Testis (tissue), 5 donors: ENCODE measurements at regions of chr14 and their contacts with region 1.

Region 1: GRCh38 chr14:37253905-37254304 is 56.2 kb downstream of the MIPOL1 start:
- DNase-seq: no peak
- H3K4me3 ChIP-seq: no peak overlapping the region
- H3K27ac ChIP-seq: no peak overlapping the region
- H3K4me1 ChIP-seq: no peaks in the 10 kb centered on the region
- H3K27me3 ChIP-seq: no peaks in the 10 kb centered on the region
- CTCF ChIP-seq: no peak
- POLR2A ChIP-seq: no peak

Region 2: DNA sequence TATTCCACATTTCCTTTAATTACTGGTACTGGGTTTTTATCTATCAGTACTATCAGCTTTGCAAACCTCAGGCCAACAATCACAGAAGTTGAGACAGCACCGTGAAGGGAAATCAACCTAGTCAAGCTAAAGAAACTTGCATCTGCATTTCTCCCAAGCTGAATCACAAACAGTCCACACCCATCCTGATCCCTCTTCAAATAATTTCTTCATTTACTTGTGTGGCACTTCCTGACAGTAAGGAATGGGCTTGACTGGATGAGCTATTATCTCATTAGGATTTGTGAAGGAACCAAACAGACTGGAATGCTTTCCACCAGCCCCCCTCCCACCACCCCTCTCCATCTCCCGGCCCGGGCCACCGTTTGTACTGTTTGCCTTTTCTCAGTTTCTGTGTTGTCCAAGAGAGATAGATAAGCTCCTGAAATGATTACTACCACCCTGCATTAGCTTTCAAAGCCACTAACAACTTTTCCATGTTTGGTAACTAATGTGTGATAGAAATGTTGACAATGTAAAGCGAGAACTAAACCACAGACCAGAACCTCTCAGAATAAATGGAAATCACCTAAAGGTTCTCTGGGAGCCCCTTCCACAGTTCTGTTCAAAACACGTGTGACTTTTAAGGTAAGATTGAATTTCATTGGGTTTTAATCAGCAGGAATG is 317.8 kb before region 1 on chr14:
- intact Hi-C with region 1: no loop called
- DNase-seq: no peak
- H3K4me3 ChIP-seq: no peak overlapping the region
- H3K27ac ChIP-seq: no peak overlapping the region
- H3K4me1 ChIP-seq: no peaks in the 10 kb centered on the region
- H3K27me3 ChIP-seq: no peaks in the 10 kb centered on the region
- CTCF ChIP-seq: no peak
- POLR2A ChIP-seq: no peak

Region 3: GRCh38 chr14:37594238-37594914 is 340.5 kb after region 1 on chr14:
- intact Hi-C with region 1: loop called (anchors 10 kb)
- DNase-seq: peak; percentile 87
- H3K4me3 ChIP-seq: peak overlapping the region; percentile 43
- H3K27ac ChIP-seq: no peak overlapping the region
- H3K4me1 ChIP-seq: peaks cover 11% of the 10 kb centered on the region
- H3K27me3 ChIP-seq: peaks cover 14% of the 10 kb centered on the region
- CTCF ChIP-seq: peak; percentile 49 to 92 (median 77)
- POLR2A ChIP-seq: no peak